Panc1 (cell line): ENCODE measurements at regions of chr12 and their contacts with region 1.

Region 1: GRCh38 chr12:54324617-54325441 is at the start of gene COPZ1:
- DNase-seq: peak; percentile 99
- ATAC-seq: peak; percentile 97
- H3K4me3 ChIP-seq: peak within 1 kb of the TSS; percentile 93 to 98
- H3K27ac ChIP-seq: peak within 1 kb of the TSS; percentile 94
- H3K4me1 ChIP-seq: peaks cover 18% of the 10 kb centered on the region
- H3K27me3 ChIP-seq: no peaks in the 10 kb centered on the region
- CTCF ChIP-seq: peak; percentile 94
- total RNA-seq, gene COPZ1: 175 TPM

Region 2: DNA sequence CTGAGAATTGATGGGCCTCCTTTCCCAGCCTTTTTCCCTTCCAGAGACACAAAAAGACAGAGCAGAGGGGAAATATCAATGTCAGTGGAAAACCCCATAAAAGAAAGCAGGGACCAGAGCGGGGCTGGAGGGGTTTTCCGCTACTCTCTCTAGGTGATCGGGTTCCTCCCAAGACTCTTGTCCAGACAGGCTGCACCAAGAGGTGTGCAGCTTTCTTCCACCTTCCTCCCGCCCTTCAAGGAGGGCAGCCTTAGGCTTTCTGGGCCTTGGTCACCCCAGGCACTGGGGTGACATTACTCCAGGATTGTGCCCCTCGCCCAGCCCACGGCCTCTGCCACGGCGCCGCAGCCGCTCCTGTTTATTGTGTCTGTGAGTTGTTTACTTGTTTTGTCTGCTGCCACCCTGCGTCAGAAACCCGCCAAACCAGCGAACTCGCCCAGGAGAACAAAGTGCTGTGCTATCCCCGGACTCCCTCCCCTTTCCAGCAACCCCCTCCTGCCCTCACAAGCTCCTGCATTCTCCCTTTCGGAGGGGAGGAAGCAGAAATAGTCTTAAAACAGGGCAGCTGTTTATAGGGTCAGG is 303.3 kb before region 1 on chr12:
- CTCF ChIA-PET with region 1: no interaction called
- POLR2A ChIA-PET with region 1: no interaction called
- in situ Hi-C with region 1: no loop called
- intact Hi-C with region 1: no loop called
- DNase-seq: no peak
- ATAC-seq: peak; percentile 14
- H3K4me3 ChIP-seq: peak overlapping the region; percentile 72 to 91
- H3K27ac ChIP-seq: peak overlapping the region; percentile 95
- H3K4me1 ChIP-seq: peaks cover 65% of the 10 kb centered on the region
- H3K27me3 ChIP-seq: no peaks in the 10 kb centered on the region
- CTCF ChIP-seq: peak; percentile 76

Region 3: GRCh38 chr12:54191550-54192022 is 133.2 kb before region 1 on chr12:
- CTCF ChIA-PET with region 1: interaction called, 12 read pairs
- POLR2A ChIA-PET with region 1: no interaction called
- in situ Hi-C with region 1: no loop called
- intact Hi-C with region 1: no loop called
- DNase-seq: peak; percentile 73
- ATAC-seq: peak; percentile 84
- H3K4me3 ChIP-seq: 0 out of 4 replicates have a peak overlapping the region, but pooled peaks of 1 of the 2 experiments have one; percentile 4
- H3K27ac ChIP-seq: peak overlapping the region; percentile 72
- H3K4me1 ChIP-seq: peaks cover 16% of the 10 kb centered on the region
- H3K27me3 ChIP-seq: no peaks in the 10 kb centered on the region
- CTCF ChIP-seq: peak; percentile 94

Region 4: DNA sequence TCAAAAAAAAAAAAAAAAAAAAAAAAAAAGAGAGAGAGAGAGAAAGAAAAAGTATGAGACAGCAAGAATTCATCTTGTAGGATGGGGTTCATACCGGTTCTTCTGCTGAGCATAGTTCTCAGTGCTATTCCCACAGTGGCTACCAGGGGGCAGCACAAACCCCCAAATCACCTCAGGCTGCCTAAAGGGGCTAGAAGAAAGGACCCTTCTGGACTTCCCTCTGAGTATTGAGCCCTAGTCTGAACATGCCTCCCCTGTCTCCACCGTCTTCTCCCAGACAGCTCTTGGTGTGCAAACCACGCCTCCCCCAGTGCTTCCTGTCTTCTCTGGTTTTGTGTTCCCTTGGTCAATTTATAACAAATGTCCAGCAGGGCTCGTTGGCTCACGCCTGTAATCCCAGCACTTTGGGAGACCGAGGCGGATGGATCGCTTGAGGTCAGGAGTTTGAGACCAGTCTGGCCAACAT is 104.7 kb before region 1 on chr12:
- CTCF ChIA-PET with region 1: interaction called, 13 read pairs
- POLR2A ChIA-PET with region 1: interaction called, 21 read pairs
- in situ Hi-C with region 1: no loop called
- intact Hi-C with region 1: no loop called
- DNase-seq: peak; percentile 75
- ATAC-seq: peak; percentile 58
- H3K4me3 ChIP-seq: peak overlapping the region; percentile 33 to 47
- H3K27ac ChIP-seq: peak overlapping the region; percentile 67
- H3K4me1 ChIP-seq: peaks cover 12% of the 10 kb centered on the region
- H3K27me3 ChIP-seq: no peaks in the 10 kb centered on the region
- CTCF ChIP-seq: peak; percentile 92

Region 5: DNA sequence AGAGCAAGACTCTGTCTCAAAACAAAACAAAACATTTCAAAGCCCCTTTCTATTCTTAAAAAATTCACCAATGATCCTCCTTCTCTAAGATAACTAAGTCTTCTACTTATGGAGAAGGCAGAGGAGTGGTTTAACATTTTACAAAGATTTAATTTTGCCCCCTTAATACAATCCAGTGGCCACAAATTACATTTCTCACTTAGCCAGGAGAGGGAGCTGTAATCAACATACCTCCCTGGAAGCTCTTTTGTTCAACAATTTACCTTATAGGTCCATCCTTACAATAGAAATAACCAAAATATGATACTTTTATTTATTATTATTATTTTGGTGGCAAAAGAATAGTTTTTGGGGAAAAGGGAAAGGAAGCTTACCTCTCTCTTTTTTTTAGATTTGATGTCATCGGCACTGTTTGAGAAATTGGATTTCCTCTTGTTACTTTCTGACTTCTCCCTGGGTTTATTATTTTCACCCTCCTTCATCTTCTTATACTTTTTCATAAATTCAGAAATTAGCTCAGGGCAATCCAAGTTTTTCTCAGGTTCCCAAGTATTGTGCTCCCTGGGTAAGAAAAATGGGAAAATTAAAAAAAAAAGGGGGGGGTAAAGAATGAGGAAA is 73.1 kb before region 1 on chr12:
- CTCF ChIA-PET with region 1: interaction called, 12 read pairs
- POLR2A ChIA-PET with region 1: no interaction called
- in situ Hi-C with region 1: no loop called
- intact Hi-C with region 1: no loop called
- DNase-seq: no peak
- ATAC-seq: peak; percentile 57; the same call in 1 of the 2 replicates
- H3K4me3 ChIP-seq: no peak overlapping the region
- H3K27ac ChIP-seq: peak overlapping the region; percentile 73
- H3K4me1 ChIP-seq: peaks cover 17% of the 10 kb centered on the region
- H3K27me3 ChIP-seq: no peaks in the 10 kb centered on the region
- CTCF ChIP-seq: no peak; the same call in 1 of the 2 replicates

Region 6: GRCh38 chr12:54285150-54286041 is 39.4 kb before region 1 on chr12:
- CTCF ChIA-PET with region 1: interaction called, 19 read pairs
- POLR2A ChIA-PET with region 1: interaction called, 10 read pairs
- in situ Hi-C with region 1: no loop called
- intact Hi-C with region 1: loop called (anchors 2 kb)
- DNase-seq: no peak
- ATAC-seq: no peak
- H3K4me3 ChIP-seq: peak overlapping the region; percentile 26 to 99
- H3K27ac ChIP-seq: peak overlapping the region; percentile 44
- H3K4me1 ChIP-seq: peaks cover 40% of the 10 kb centered on the region
- H3K27me3 ChIP-seq: no peaks in the 10 kb centered on the region
- CTCF ChIP-seq: no peak; the same call in 1 of the 2 replicates

Region 7: DNA sequence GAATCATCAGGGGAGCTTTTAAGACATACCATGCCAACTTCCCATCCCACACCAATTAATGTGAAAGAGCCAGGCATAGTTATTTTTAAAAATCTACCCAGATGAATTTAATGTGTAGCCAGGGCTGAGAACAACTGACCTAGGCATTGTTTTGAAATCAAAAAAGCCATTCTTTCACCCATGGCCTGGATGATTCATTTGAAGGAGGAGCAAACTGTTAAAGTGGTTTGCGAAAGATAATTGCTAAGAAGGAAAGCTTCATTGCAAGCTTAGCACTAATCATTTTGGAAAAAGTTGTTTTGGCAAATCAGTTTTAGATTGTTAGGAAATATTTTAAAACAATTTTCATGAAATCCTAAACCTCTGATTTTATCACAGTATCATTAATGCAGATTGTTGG is 150.7 kb after region 1 on chr12:
- CTCF ChIA-PET with region 1: no interaction called
- POLR2A ChIA-PET with region 1: interaction called, 14 read pairs
- in situ Hi-C with region 1: no loop called
- intact Hi-C with region 1: no loop called
- DNase-seq: no peak
- ATAC-seq: no peak
- H3K4me3 ChIP-seq: no peak overlapping the region
- H3K27ac ChIP-seq: no peak overlapping the region
- H3K4me1 ChIP-seq: no peaks in the 10 kb centered on the region
- H3K27me3 ChIP-seq: peaks cover 9% of the 10 kb centered on the region
- CTCF ChIP-seq: no peak